ENCODE measurements at regions of chr5 and their contacts with region 1.

Region 1: GRCh38 chr5:115785381-115786065 is 30.9 kb downstream of the CDO1 start:
- DNase-seq: no peak
- ATAC-seq: no peak
- H3K4me3 ChIP-seq: no peak overlapping the region
- H3K27ac ChIP-seq: no peak overlapping the region
- H3K4me1 ChIP-seq: no peaks in the 10 kb centered on the region
- H3K27me3 ChIP-seq: no peaks in the 10 kb centered on the region
- CTCF ChIP-seq: no peak
- EP300 ChIP-seq: no peak
- POLR2A ChIP-seq: no peak
- RAD21 ChIP-seq: no peak

Region 2: GRCh38 chr5:115772731-115773475 is 12.6 kb before region 1 on chr5:
- CTCF ChIA-PET with region 1: interaction called, 12 read pairs
- POLR2A ChIA-PET with region 1: no interaction called
- RAD21 ChIA-PET with region 1: interaction called, 3 read pairs
- SMC1A ChIA-PET with region 1: interaction called, 7 read pairs
- in situ Hi-C with region 1: no loop called
- intact Hi-C with region 1: no loop called
- DNase-seq: no peak
- ATAC-seq: no peak
- H3K4me3 ChIP-seq: no peak overlapping the region
- H3K27ac ChIP-seq: no peak overlapping the region
- H3K4me1 ChIP-seq: no peaks in the 10 kb centered on the region
- H3K27me3 ChIP-seq: no peaks in the 10 kb centered on the region
- CTCF ChIP-seq: no peak
- EP300 ChIP-seq: no peak
- POLR2A ChIP-seq: no peak
- RAD21 ChIP-seq: no peak

Measured in GM12878 (cell line).